Ascending aorta (tissue), 2 donors: ENCODE measurements at regions of chr10 and their contacts with region 1.

Region 1: DNA sequence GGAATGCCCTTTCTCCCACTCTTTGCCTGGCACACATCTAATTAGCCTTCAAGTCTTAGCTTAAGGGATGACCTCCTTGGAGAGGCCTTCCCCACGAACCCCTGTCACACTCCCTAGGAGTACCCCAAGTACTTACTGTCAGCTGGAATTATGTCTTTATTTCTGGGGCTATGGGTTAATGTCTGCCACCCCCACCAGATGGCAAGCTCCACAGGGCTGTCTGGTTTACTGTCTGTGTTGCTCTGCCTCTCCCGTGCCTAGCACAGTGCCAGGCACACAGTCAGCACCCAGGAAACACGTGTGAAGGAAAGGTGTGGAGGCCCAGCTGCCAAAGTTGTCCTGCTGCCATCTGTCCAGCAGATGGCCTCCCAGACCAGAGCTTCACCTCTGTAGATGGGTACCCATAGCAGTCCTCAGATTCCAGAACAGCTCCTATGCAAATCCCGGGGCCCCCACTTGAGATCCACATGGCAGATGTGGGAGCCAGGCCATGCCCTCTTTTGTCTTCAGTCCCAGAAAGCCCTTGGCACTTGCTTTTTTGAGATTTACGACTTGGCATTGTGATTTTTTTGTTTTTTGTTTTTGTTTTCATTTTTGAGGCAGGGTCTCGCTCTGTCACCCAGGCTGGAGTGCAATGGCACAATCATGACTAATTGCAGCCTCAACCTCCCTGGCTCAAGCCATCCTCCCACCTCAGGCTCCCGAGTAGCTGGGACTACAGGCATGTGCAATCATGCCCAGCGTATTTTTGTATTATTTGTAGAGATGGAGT is 17.2 kb upstream of the PALD1 start:
- DNase-seq: no peak
- H3K4me3 ChIP-seq: no peak overlapping the region
- H3K27ac ChIP-seq: peak overlapping the region in 1 of 2 donors; percentile 33
- H3K4me1 ChIP-seq: peaks cover 5 to 18% of the 10 kb centered on the region in 2 donors
- H3K27me3 ChIP-seq: no peaks in the 10 kb centered on the region
- CTCF ChIP-seq: peak; percentile 79 to 92 (median 88)

Region 2: GRCh38 chr10:70381471-70382421 is 79.7 kb before region 1 on chr10:
- intact Hi-C with region 1: loop called (anchors 5 kb)
- DNase-seq: peak in 1 of 2 donors; percentile 73
- H3K4me3 ChIP-seq: peak overlapping the region; percentile 70 to 86
- H3K27ac ChIP-seq: peak overlapping the region; percentile 16 to 56
- H3K4me1 ChIP-seq: peaks cover 0 to 7% of the 10 kb centered on the region in 2 donors
- H3K27me3 ChIP-seq: no peaks in the 10 kb centered on the region
- CTCF ChIP-seq: no peak

Region 3: DNA sequence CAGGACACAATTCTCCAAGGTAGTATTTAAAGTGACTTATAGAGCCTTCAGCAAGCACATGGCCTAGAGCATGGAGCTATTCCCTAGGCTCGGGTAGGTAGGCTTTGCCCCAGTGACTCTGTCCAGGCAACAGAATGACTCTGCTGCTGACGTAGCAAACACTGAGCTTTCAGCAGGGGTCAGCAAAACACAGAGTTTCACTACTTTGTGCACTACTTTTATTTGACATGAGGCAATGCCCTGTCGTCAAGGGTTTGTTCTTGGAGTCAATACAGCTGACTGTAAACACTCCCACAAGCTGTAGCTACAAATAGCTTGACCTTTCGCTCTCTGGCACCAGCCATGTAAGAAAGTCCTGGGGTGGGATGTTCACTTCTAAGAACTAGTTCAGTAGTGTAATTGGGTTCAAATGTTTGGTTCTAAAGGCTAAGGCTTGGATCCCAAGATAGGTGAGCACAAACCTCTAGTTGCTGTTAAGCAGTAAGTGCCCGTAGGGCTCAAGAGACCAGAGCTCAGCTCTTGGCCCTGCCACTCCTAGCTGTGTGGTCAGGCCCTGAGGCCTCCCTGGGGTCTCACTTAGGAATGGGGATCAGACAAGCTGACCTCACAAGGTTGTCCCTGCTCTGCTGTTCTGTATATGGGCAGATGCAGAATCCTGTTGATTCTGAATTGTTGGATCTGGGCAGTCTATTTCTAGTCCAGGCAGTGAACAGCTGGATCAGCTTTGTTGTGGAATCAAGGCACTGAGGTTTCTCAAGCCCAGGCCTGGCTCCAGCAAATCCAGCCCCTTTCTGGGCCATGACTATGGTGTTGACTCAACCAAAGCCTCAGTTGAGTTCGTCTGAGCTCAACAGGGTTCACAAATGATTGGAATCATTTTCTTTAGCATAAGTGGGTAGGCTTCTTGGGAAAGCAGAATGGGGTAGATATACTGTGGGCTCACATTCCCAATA is 30.6 kb before region 1 on chr10:
- intact Hi-C with region 1: loop called (anchors 2 kb)
- DNase-seq: peak; percentile 43 to 86
- H3K4me3 ChIP-seq: peak overlapping the region in 1 of 2 donors; percentile 8
- H3K27ac ChIP-seq: peak overlapping the region; percentile 70 to 89
- H3K4me1 ChIP-seq: peaks cover 6 to 23% of the 10 kb centered on the region in 2 donors
- H3K27me3 ChIP-seq: no peaks in the 10 kb centered on the region
- CTCF ChIP-seq: no peak

Region 4: GRCh38 chr10:70540089-70540788 is 78.8 kb after region 1 on chr10:
- intact Hi-C with region 1: loop called (anchors 1 kb)
- DNase-seq: no peak
- H3K4me3 ChIP-seq: no peak overlapping the region
- H3K27ac ChIP-seq: no peak overlapping the region
- H3K4me1 ChIP-seq: no peaks in the 10 kb centered on the region
- H3K27me3 ChIP-seq: no peaks in the 10 kb centered on the region
- CTCF ChIP-seq: peak; percentile 43 to 66 (median 54)

Region 5: DNA sequence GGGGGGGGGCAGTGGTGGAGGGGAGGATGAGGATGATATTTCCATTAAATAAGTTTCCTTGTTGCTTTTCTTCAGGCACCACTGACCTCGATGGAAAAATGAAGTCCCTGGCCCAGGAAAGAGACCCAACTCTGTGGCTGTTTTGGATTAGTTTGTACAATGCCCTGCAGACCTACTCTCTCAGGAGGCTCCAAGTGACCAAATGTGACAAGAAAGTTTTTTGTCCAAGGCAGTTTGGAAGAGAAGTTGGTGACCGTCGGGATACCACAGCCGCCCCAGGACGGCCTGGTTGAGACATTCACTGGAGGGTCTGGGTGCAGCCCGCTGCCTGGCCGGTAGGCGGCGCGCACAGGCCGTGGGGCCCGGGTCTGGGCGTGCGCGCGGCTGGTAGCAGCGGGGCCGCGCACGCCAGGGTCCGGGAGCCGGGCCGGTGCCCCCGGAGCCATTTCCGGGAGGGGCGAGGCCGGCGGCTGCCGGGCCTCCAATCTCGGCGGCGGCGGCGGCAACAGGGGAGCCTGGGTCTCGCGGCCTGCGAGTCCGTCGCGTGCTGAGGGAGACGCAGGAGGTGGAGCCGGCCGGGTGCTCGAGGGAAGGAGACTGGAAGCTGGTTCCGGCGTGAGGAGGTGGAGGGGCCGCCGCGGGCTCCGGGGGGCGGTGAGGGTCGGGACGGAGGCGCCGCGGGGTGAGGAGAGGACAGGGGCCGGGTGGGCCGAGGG is 354.3 kb after region 1 on chr10 and contains the start of gene SGPL1:
- intact Hi-C with region 1: loop called (anchors 5 kb)
- DNase-seq: peak; percentile 39 to 92
- H3K4me3 ChIP-seq: peak within 1 kb of the TSS; percentile 82 to 90
- H3K27ac ChIP-seq: peak within 1 kb of the TSS; percentile 91 to 98
- H3K4me1 ChIP-seq: peaks cover 0 to 5% of the 10 kb centered on the region in 2 donors
- H3K27me3 ChIP-seq: no peaks in the 10 kb centered on the region
- CTCF ChIP-seq: peak; percentile 81 to 99 (median 86)
- total RNA-seq, gene SGPL1: 6.2 TPM